ENCODE measurements at regions of chr17 and their contacts with region 1.

Region 1: GRCh38 chr17:36545465-36546417 is 1.0 kb downstream of the GGNBP2 start:
- DNase-seq: no peak
- H3K4me3 ChIP-seq: peak overlapping the region; percentile 98 to 100 (median 100)
- H3K27ac ChIP-seq: peak overlapping the region; percentile 100
- H3K4me1 ChIP-seq: peaks cover 40 to 64% (median 61%) of the 10 kb centered on the region in 4 donors
- H3K27me3 ChIP-seq: no peaks in the 10 kb centered on the region
- CTCF ChIP-seq: peak in 1 of 3 experiments; percentile 17
- EP300 ChIP-seq: no peak
- POLR2A ChIP-seq: peak; percentile 80

Region 2: GRCh38 chr17:36496018-36496789 is 49.5 kb before region 1 on chr17:
- intact Hi-C with region 1: no loop called
- DNase-seq: no peak
- H3K4me3 ChIP-seq: no peak overlapping the region
- H3K27ac ChIP-seq: no peak overlapping the region
- H3K4me1 ChIP-seq: peaks cover 0 to 4% (median 2%) of the 10 kb centered on the region in 4 donors
- H3K27me3 ChIP-seq: no peaks in the 10 kb centered on the region
- CTCF ChIP-seq: no peak
- EP300 ChIP-seq: no peak
- POLR2A ChIP-seq: no peak

Region 3: GRCh38 chr17:36510636-36511035 is 35.1 kb before region 1 on chr17:
- intact Hi-C with region 1: no loop called
- DNase-seq: no peak
- H3K4me3 ChIP-seq: no peak overlapping the region
- H3K27ac ChIP-seq: no peak overlapping the region
- H3K4me1 ChIP-seq: peaks cover 0 to 3% (median 0%) of the 10 kb centered on the region in 4 donors
- H3K27me3 ChIP-seq: no peaks in the 10 kb centered on the region
- CTCF ChIP-seq: no peak
- EP300 ChIP-seq: no peak
- POLR2A ChIP-seq: no peak

Region 4: GRCh38 chr17:36601303-36602029 is 55.7 kb after region 1 on chr17 and contains the start of gene MRM1:
- intact Hi-C with region 1: loop called (anchors 2 kb)
- DNase-seq: peak; percentile 97
- H3K4me3 ChIP-seq: peak within 1 kb of the TSS; percentile 71 to 95 (median 81)
- H3K27ac ChIP-seq: peak within 1 kb of the TSS; percentile 78 to 87 (median 80)
- H3K4me1 ChIP-seq: peaks cover 21 to 37% (median 31%) of the 10 kb centered on the region in 4 donors
- H3K27me3 ChIP-seq: no peaks in the 10 kb centered on the region
- CTCF ChIP-seq: peak in 2 of 3 experiments; percentile 11 to 44
- EP300 ChIP-seq: no peak
- POLR2A ChIP-seq: peak; percentile 21
- total RNA-seq, gene MRM1: 6.2 to 10.8 (median 8.5) TPM

Measured in esophagus muscularis mucosa (tissue), 4 donors.